H1 (cell line): ENCODE measurements at regions of chr5 and their contacts with region 1.

Region 1: DNA sequence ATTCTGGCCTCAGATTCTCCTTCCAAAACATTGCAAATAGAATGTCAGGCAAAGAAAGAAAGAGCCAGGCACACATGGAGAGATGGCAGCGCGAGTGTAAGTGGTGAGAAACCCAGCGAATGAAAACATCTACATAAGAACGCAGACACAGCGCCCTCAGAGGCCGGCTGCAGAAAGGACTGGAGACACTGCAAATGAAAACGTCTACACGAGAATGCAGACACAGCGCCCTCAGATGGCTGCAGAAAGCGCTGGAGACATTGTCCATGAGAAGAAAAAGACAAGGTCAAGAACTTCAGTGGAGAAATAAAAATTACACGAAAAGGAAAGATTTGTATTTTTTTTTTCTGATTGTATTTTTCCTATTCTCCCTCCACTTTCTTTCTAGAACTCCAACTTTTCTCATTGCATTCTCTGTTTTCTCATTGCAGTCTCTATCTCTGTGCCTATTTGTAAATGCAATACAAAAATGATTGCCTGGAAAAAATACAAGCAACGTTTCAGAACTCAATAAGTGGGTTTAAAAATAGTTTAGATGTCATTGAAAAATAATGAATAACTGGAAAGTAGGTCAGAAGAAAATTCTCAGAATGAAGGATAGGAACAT is 117.9 kb upstream of the LPCAT1 start:
- DNase-seq: peak in 1 of 2 experiments; percentile 68
- H3K4me3 ChIP-seq: peak overlapping the region in 1 of 4 experiments; percentile 32; a peak in 1 of 8 replicates
- H3K27ac ChIP-seq: no peak overlapping the region
- H3K4me1 ChIP-seq: peaks cover 2 to 28% (median 8%) of the 10 kb centered on the region in 4 experiments
- H3K27me3 ChIP-seq: peaks cover 0 to 17% (median 11%) of the 10 kb centered on the region in 4 experiments; a peak in 6 of 7 replicates
- CTCF ChIP-seq: peak; percentile 73 to 98 (median 90)
- EP300 ChIP-seq: no peak
- POLR2A ChIP-seq: no peak
- RAD21 ChIP-seq: peak; percentile 76 to 79

Region 2: GRCh38 chr5:1652596-1653345 is 11.1 kb after region 1 on chr5:
- CTCF ChIA-PET with region 1: interaction called, 24 read pairs
- POLR2A ChIA-PET with region 1: no interaction called
- DNase-seq: peak in 1 of 2 experiments; percentile 56
- H3K4me3 ChIP-seq: peak overlapping the region in 2 of 4 experiments; percentile 20 to 46; a peak in 4 of 8 replicates
- H3K27ac ChIP-seq: no peak overlapping the region
- H3K4me1 ChIP-seq: peaks cover 0 to 6% (median 0%) of the 10 kb centered on the region in 4 experiments; a peak in 3 of 7 replicates
- H3K27me3 ChIP-seq: peaks cover 0 to 21% (median 16%) of the 10 kb centered on the region in 4 experiments; a peak in 6 of 7 replicates
- CTCF ChIP-seq: no peak
- EP300 ChIP-seq: no peak
- POLR2A ChIP-seq: no peak
- RAD21 ChIP-seq: no peak